ENCODE measurements at regions of chr4 and their contacts with region 1.

Region 1: GRCh38 chr4:70505151-70505748 is 13.1 kb upstream of the AMTN start:
- DNase-seq: peak in 4 of 5 donors; percentile 19 to 46 (median 28)
- H3K4me3 ChIP-seq: no peak overlapping the region
- H3K4me3 Mint-ChIP-seq: no peak overlapping the region
- H3K27ac ChIP-seq: no peak overlapping the region
- H3K27ac Mint-ChIP-seq: no peak overlapping the region
- H3K4me1 ChIP-seq: no peaks in the 10 kb centered on the region
- H3K4me1 Mint-ChIP-seq: no peaks in the 10 kb centered on the region
- H3K27me3 ChIP-seq: no peaks in the 10 kb centered on the region
- H3K27me3 Mint-ChIP-seq: peaks cover 0 to 2% of the 10 kb centered on the region in 2 donors

Region 2: GRCh38 chr4:69322055-69322454 is 1183.2 kb before region 1 on chr4:
- CTCF ChIA-PET with region 1: no interaction called
- POLR2A ChIA-PET with region 1: no interaction called
- intact Hi-C with region 1: loop called (anchors 10 kb)
- DNase-seq: no peak
- H3K4me3 ChIP-seq: no peak overlapping the region
- H3K4me3 Mint-ChIP-seq: no peak overlapping the region
- H3K27ac ChIP-seq: no peak overlapping the region
- H3K27ac Mint-ChIP-seq: no peak overlapping the region
- H3K4me1 ChIP-seq: no peaks in the 10 kb centered on the region
- H3K4me1 Mint-ChIP-seq: no peaks in the 10 kb centered on the region
- H3K27me3 ChIP-seq: no peaks in the 10 kb centered on the region
- H3K27me3 Mint-ChIP-seq: no peaks in the 10 kb centered on the region

Region 3: GRCh38 chr4:69689599-69689998 is 815.7 kb before region 1 on chr4:
- CTCF ChIA-PET with region 1: interaction called, 3 read pairs
- POLR2A ChIA-PET with region 1: no interaction called
- intact Hi-C with region 1: loop called (anchors 1 kb)
- DNase-seq: peak in 4 of 5 donors; percentile 12 to 38 (median 33)
- H3K4me3 ChIP-seq: no peak overlapping the region
- H3K4me3 Mint-ChIP-seq: peak overlapping the region in 3 of 8 donors; percentile 34 to 58 (median 45)
- H3K27ac ChIP-seq: no peak overlapping the region
- H3K27ac Mint-ChIP-seq: no peak overlapping the region
- H3K4me1 ChIP-seq: no peaks in the 10 kb centered on the region
- H3K4me1 Mint-ChIP-seq: peaks cover 0 to 5% (median 3%) of the 10 kb centered on the region in 4 donors
- H3K27me3 ChIP-seq: no peaks in the 10 kb centered on the region
- H3K27me3 Mint-ChIP-seq: no peaks in the 10 kb centered on the region

Region 4: GRCh38 chr4:70571772-70572171 is 66.5 kb after region 1 on chr4:
- CTCF ChIA-PET with region 1: no interaction called
- POLR2A ChIA-PET with region 1: no interaction called
- intact Hi-C with region 1: no loop called
- DNase-seq: no peak
- H3K4me3 ChIP-seq: no peak overlapping the region
- H3K4me3 Mint-ChIP-seq: no peak overlapping the region
- H3K27ac ChIP-seq: no peak overlapping the region
- H3K27ac Mint-ChIP-seq: no peak overlapping the region
- H3K4me1 ChIP-seq: no peaks in the 10 kb centered on the region
- H3K4me1 Mint-ChIP-seq: no peaks in the 10 kb centered on the region
- H3K27me3 ChIP-seq: no peaks in the 10 kb centered on the region
- H3K27me3 Mint-ChIP-seq: peaks cover 3 to 8% of the 10 kb centered on the region in 2 donors